ENCODE measurements at regions of chr12 and their contacts with region 1.

Region 1: DNA sequence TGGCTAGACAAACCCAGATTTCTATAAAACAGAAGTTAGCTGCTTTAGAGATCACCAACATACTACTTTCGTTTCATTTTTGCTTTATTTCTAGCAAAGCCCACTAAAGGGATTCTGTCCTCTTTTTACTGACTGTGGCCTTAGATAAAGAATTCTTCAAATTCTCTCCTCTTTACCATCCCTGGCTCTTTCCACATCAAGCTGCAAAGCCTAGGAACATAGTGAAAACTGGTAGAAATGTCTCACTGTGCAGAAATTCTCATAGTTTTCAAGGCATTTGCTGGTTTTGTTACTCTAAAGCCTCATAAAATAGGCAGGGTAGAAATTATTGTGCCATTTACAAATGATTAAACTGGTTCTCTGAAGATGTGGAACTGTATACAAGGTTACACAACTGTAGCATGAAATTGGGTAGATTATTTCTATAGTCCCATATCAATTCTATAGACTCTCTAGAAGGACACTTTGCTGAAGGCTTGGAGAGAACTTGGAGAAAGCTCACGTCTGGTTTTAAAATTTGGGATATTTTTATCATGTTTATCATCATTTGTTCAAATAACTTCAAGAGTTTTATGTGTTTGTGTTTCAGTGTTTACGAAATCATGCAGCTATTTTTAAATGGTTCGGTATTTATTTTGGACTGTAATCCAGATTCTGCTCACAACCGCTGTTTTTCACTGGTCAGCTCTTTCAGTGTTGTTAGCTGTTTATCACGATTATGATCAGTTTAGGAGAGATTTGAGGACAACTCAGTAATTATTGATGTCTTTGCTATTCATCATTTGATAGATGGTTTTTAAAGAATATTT is 36.7 kb upstream of the CSRP2 start:
- DNase-seq: no peak
- ATAC-seq: no peak
- H3K4me3 ChIP-seq: no peak overlapping the region
- H3K4me3 Mint-ChIP-seq: no peak overlapping the region
- H3K27ac ChIP-seq: no peak overlapping the region
- H3K27ac Mint-ChIP-seq: no peak overlapping the region
- H3K4me1 ChIP-seq: no peaks in the 10 kb centered on the region
- H3K4me1 Mint-ChIP-seq: peaks cover 4% of the 10 kb centered on the region
- H3K27me3 ChIP-seq: no peaks in the 10 kb centered on the region
- H3K27me3 Mint-ChIP-seq: peaks cover 2% of the 10 kb centered on the region
- CTCF ChIP-seq: no peak

Region 2: DNA sequence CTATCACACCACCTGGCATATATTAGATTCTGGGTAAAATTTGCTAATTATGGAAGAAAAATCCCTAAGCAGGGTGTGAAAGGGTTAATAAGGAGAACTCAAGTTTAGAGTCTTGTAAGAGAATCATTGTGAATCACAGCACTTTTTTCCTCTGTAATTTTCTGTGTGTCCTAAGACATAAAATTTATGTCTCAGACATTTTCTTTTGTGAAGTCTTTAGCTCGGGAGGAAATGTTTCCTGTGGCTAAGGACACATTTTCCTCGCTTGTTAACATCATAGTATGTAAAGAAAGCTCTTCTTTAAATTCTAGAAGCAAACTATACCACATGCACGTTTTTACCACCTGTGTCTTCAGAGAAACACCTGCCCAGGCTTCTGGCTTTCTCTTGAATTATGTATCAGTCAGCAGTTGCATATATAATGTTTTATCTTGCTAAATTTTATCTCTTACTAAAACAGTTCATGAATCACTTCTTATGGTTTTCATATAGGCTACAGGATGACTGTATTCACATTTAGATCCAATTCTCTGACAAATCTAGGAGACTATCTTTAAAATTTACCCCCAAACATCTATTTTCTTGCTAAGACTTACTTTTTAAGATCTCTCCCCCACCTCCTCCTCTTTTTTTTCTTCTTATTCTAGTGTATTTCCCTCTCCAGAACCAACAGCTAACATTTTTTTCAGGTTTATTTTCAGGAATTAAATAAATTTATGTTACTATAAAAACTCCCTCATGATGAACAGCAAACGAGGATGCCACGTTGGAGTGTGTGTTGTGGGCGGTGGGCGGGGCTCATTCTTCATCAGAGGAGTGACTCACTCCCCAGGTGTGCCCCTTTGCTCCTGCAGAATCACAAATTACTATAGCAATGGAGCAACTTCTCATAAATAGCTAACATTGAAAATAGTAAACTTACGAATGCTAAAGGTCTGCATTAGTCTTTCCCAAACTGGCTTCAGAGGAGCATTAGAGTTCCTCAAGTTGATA is 25.1 kb before region 1 on chr12:
- CTCF ChIA-PET with region 1: no interaction called
- POLR2A ChIA-PET with region 1: no interaction called
- intact Hi-C with region 1: loop called in 1 of 2 experiments (anchors 2 kb)
- DNase-seq: peak in 6 of 9 experiments; percentile 13 to 38 (median 16)
- ATAC-seq: peak; percentile 40
- H3K4me3 ChIP-seq: no peak overlapping the region
- H3K4me3 Mint-ChIP-seq: no peak overlapping the region
- H3K27ac ChIP-seq: no peak overlapping the region
- H3K27ac Mint-ChIP-seq: no peak overlapping the region
- H3K4me1 ChIP-seq: no peaks in the 10 kb centered on the region
- H3K4me1 Mint-ChIP-seq: peaks cover 11% of the 10 kb centered on the region
- H3K27me3 ChIP-seq: peaks cover 0 to 2% of the 10 kb centered on the region in 2 experiments
- H3K27me3 Mint-ChIP-seq: peaks cover 15% of the 10 kb centered on the region
- CTCF ChIP-seq: no peak

Region 3: DNA sequence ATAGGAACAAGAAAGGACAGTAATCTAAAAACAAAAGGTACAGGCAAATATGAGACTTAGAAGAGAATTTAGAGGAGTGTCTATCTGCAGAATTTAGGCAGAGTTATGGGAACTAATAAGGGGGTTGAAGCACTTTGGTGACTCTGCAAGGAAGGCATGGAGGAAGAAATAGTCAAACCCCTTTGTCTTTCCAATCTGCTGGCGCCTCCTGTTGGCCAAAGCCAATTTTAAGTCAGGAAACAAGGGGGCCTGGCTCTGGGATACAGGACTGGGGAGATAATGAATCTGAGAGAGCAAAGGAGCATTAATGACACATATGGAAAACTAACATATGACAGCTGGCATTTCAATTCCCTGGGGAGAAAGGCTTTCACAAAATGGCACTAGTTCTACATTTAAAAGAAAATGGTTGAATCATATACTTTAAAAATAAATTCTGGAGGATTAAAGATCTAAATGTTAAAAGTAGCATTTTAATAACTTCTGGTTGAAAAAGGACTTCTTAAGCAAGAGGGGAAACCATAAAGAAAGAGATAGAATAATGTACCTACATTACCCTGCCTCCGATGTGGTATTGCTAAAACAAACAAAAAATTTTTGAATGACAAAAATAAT is 11.7 kb after region 1 on chr12:
- CTCF ChIA-PET with region 1: no interaction called
- POLR2A ChIA-PET with region 1: no interaction called
- intact Hi-C with region 1: no loop called
- DNase-seq: peak in 3 of 9 experiments; percentile 5 to 28 (median 15)
- ATAC-seq: no peak
- H3K4me3 ChIP-seq: no peak overlapping the region
- H3K4me3 Mint-ChIP-seq: no peak overlapping the region
- H3K27ac ChIP-seq: no peak overlapping the region
- H3K27ac Mint-ChIP-seq: no peak overlapping the region
- H3K4me1 ChIP-seq: no peaks in the 10 kb centered on the region
- H3K4me1 Mint-ChIP-seq: no peaks in the 10 kb centered on the region
- H3K27me3 ChIP-seq: no peaks in the 10 kb centered on the region
- H3K27me3 Mint-ChIP-seq: peaks cover 6% of the 10 kb centered on the region
- CTCF ChIP-seq: no peak

Region 4: DNA sequence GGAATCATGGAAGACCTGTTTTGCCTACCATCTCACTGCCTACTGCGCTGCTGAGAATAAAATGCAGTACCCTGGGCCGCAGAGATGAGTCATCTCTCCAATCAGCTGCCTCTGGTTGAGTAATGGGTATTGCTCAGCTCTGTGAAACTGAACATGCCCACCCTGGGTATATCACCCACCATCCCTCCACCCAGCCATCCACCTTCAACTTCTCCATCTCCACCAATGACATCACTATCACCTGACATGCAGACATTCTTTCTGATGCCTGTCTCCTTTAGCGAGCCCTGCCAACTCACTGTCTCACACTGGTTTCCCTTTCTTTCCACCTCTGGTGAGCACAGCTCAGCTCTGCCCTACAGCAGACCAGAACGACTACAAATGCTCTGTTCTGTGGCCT is 116.2 kb after region 1 on chr12:
- CTCF ChIA-PET with region 1: no interaction called
- POLR2A ChIA-PET with region 1: no interaction called
- intact Hi-C with region 1: no loop called
- DNase-seq: peak in 1 of 9 experiments; percentile 21
- ATAC-seq: peak; percentile 11
- H3K4me3 ChIP-seq: no peak overlapping the region
- H3K4me3 Mint-ChIP-seq: no peak overlapping the region
- H3K27ac ChIP-seq: no peak overlapping the region
- H3K27ac Mint-ChIP-seq: no peak overlapping the region
- H3K4me1 ChIP-seq: no peaks in the 10 kb centered on the region
- H3K4me1 Mint-ChIP-seq: no peaks in the 10 kb centered on the region
- H3K27me3 ChIP-seq: no peaks in the 10 kb centered on the region
- H3K27me3 Mint-ChIP-seq: no peaks in the 10 kb centered on the region
- CTCF ChIP-seq: no peak